Motor neuron (in vitro differentiated cells): ENCODE measurements at regions of chr5 and their contacts with region 1.

Region 1: DNA sequence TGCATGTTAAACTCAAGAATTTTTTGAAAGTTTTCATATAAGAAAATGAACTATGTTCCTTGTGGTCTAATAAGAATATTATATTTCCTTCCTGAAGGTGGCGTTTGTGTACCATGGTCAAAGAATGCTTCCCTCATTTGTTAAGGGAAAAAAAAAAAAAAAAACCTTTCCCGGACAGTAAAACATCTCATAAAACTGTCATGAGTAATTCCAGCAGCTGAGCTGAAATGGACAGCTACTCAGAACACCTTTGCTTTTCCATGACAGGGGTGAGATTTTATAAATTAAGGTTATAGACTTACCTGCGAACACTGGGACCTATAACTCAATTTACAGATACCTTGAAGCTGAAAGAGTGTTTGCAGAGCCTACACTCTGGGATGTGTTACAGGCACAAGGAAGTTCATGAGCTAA is 113.2 kb upstream of the RANBP3L start:
- ATAC-seq: peak; percentile 41 to 68 (median 56)
- H3K4me3 ChIP-seq: no peak overlapping the region
- H3K27ac ChIP-seq: no peak overlapping the region
- H3K4me1 ChIP-seq: peaks cover 0 to 2% of the 10 kb centered on the region in 2 donors

Region 2: DNA sequence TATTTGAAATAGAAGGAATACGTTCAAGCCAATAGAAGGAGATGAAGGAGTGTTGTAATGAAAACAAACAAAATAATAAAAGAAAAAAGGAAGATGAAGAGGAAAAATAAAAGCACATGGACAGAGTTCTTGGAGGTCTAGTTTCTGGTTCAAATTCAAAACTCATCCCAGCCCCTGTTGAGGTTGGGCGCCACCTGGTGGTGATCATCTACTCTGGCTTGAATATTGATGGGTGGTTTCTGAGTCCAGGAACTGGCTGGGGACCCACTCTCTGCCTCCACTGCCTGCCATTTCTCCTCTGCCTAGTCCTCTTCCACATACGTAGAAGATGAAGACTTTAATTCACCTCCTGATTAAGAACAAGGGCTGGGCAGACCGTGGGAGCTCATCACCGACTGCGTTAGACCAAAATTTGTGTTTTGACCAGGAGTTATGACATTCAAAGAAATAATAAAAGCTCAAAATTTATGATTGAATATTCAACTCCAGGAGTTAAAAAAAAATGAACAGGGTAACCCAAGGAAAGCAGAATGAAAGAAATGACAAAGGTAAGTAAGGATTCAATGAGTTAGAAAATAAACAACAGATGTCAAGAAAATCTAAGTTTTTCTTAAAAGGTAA is 92.6 kb after region 1 on chr5:
- in situ Hi-C with region 1: loop called in 3 of 9 experiments (anchors 10 kb)
- ATAC-seq: peak in 3 of 8 experiments; percentile 52 to 71 (median 58)
- H3K4me3 ChIP-seq: no peak overlapping the region
- H3K27ac ChIP-seq: no peak overlapping the region
- H3K4me1 ChIP-seq: no peaks in the 10 kb centered on the region

Region 3: DNA sequence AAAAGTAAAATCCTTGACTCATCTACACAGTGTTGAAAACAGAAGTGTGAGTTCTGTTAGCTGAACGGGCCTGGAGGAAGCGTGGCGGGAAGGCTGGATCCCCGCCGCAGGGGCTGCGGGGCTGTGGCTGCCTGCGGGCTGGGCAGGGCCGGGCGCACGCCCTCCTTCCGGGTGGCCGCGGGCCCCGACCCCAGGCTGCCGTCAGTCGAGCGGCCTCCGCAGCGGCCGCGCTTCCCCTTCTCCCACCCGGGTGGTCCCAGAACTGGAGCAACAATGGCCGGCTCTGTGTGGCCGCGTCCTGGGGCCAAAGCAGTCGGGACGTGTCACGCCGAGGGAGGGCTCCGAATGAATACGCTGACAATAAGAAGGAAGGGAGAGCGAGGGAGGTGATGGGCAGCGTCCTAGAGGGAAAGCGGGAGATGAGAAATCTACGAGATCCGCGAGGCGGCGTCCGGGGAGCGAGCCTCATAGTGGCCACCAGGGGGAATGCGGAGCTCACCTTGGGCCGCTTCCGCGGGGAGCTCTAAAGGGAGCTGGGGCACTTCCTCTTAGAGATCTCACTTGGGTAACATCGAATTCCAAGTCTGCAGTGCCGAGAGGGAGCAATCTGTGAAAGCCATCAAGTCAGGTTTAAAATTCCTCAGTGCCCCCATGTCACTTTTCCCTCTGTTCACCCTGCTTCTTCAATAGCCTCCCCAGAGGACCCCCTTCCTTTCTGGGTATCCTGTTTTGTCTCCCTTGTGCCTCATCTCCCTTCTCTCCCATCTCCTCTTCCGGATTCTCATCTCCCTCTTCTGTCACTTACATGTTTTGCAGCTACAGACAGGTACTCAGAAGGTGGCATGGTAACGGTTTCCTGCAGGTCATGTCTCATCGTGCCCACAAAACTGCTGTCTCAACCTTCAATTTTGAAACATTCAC is 275.4 kb after region 1 on chr5:
- in situ Hi-C with region 1: loop called in 6 of 9 experiments (anchors 10 to 25 kb)
- ATAC-seq: peak; percentile 86 to 96 (median 90)
- H3K4me3 ChIP-seq: peak overlapping the region; percentile 37 to 52 (median 42)
- H3K27ac ChIP-seq: peak overlapping the region; percentile 57 to 79
- H3K4me1 ChIP-seq: peaks cover 0 to 2% of the 10 kb centered on the region in 2 donors

Region 4: GRCh38 chr5:36701085-36701698 is 286.3 kb after region 1 on chr5:
- in situ Hi-C with region 1: loop called in 8 of 9 experiments (anchors 10 to 25 kb)
- ATAC-seq: no peak
- H3K4me3 ChIP-seq: no peak overlapping the region
- H3K27ac ChIP-seq: no peak overlapping the region
- H3K4me1 ChIP-seq: peaks cover 0 to 3% of the 10 kb centered on the region in 2 donors

Region 5: DNA sequence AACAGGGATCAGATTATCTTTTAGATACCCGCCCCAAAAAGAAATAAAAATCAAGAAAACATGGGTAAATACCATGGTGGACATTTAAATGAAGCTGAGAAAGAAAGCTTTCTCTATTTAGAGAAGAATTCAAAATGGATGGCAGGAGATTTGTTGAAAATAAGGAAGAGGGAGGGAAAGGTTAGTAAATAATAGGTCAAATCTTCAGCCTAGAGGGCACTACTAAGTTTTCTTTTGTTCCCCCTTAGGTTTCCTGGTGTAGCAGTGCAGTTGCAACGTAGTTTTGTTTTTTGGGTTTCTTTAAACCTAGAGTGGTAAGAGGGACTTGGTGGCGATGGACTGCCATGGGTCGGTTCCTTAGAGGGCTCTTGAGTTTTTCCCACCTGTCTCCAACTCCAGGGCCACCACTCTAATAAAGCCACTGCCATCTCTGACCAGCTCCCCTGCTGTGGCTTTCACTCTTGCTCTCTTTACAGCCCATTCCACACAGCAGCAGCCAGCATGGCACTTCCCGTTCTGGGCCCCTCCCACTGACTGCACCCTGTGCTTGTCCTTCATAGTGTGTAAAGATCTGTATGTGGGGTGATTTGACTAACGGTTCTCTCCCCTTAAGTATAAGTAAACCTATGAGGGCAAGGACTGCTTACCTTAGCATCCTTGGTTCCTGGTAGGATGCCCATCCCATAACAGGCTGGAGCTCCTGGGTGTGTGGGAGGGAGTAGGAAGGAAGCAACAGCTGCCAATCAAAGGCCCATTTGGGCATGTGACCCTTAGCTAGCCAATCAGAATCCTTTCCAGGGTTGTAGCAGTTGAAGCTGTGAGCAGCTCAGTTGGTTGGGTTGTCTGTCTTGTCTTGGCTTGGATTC is 309.8 kb after region 1 on chr5:
- in situ Hi-C with region 1: loop called in 1 of 9 experiments (anchors 25 kb)
- ATAC-seq: peak in 1 of 8 experiments; percentile 35
- H3K4me3 ChIP-seq: no peak overlapping the region
- H3K27ac ChIP-seq: no peak overlapping the region
- H3K4me1 ChIP-seq: no peaks in the 10 kb centered on the region